CD14-positive monocyte (primary cell): ENCODE measurements at regions of chr20 and their contacts with region 1.

Region 1: DNA sequence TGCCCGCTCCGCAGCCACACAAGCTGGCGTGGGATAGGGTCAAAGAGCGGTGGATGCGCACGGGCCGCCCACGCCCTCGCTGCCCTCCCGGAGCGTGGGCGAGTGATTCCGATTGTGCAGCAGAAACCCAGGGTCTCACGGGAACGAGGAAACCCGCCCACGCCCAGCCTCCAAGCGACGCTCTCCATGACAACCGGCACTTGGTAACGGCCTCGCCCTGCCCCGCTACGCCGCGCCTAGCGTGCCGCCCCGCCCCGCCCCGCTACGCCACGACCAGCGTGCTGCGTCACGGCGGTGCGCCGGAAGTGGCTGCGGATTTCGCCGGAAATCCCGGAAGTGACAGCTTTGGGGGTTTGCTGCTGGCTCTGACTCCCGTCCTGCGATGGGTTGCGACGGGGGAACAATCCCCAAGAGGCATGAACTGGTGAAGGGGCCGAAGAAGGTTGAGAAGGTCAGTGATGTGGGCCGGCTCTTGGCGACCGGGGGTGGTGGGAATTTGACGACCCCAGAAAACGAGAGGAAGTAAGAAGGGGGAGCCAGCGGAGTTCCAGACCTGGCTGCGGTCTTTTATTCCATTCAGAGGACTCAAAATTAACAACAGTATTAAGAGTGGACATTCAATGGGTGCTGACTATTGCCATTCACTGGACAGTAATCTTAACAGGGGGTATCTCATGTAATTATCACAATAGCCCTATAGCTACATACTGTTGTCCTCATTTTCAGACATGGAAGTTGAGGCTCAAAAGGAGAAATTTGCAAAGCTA is at the start of gene RTF2:
- DNase-seq: peak; percentile 93 to 96 (median 95)
- H3K4me3 ChIP-seq: peak within 1 kb of the TSS; percentile 79 to 90 (median 86)
- H3K4me3 Mint-ChIP-seq: peak within 1 kb of the TSS; percentile 99
- H3K27ac ChIP-seq: peak within 1 kb of the TSS; percentile 75 to 96
- H3K27ac Mint-ChIP-seq: peak within 1 kb of the TSS; percentile 100
- H3K4me1 ChIP-seq: peaks cover 36 to 55% of the 10 kb centered on the region in 2 donors
- H3K4me1 Mint-ChIP-seq: peaks cover 34% of the 10 kb centered on the region
- H3K27me3 ChIP-seq: no peaks in the 10 kb centered on the region
- H3K27me3 Mint-ChIP-seq: peaks cover 0 to 2% (median 1%) of the 10 kb centered on the region in 3 donors
- CTCF ChIP-seq: no peak
- polyA plus RNA-seq, gene RTF2: 74.3 to 163 (median 148) TPM

Region 2: GRCh38 chr20:56392282-56393137 is 76.0 kb before region 1 on chr20 and contains the start of gene CSTF1:
- intact Hi-C with region 1: loop called (anchors 5 kb)
- DNase-seq: peak; percentile 100
- H3K4me3 ChIP-seq: peak within 1 kb of the TSS; percentile 86 to 96 (median 86)
- H3K4me3 Mint-ChIP-seq: no peak within 1 kb of the TSS
- H3K27ac ChIP-seq: peak within 1 kb of the TSS; percentile 85 to 94
- H3K27ac Mint-ChIP-seq: peak within 1 kb of the TSS in 5 of 7 donors; percentile 22 to 90 (median 75)
- H3K4me1 ChIP-seq: peaks cover 19 to 28% of the 10 kb centered on the region in 2 donors
- H3K4me1 Mint-ChIP-seq: peaks cover 26% of the 10 kb centered on the region
- H3K27me3 ChIP-seq: no peaks in the 10 kb centered on the region
- H3K27me3 Mint-ChIP-seq: no peaks in the 10 kb centered on the region
- CTCF ChIP-seq: no peak
- polyA plus RNA-seq, gene CSTF1: 7.7 to 15.7 (median 10.7) TPM

Region 3: GRCh38 chr20:56409521-56409920 is 59.0 kb before region 1 on chr20:
- intact Hi-C with region 1: loop called in 1 of 2 experiments (anchors 5 kb)
- DNase-seq: peak; percentile 87 to 96 (median 91)
- H3K4me3 ChIP-seq: peak overlapping the region in 1 of 3 experiments; percentile 29
- H3K4me3 Mint-ChIP-seq: no peak overlapping the region
- H3K27ac ChIP-seq: peak overlapping the region in 1 of 2 donors; percentile 75
- H3K27ac Mint-ChIP-seq: peak overlapping the region; percentile 79 to 94 (median 88)
- H3K4me1 ChIP-seq: peaks cover 49 to 51% of the 10 kb centered on the region in 2 donors
- H3K4me1 Mint-ChIP-seq: peaks cover 46% of the 10 kb centered on the region
- H3K27me3 ChIP-seq: no peaks in the 10 kb centered on the region
- H3K27me3 Mint-ChIP-seq: peaks cover 0 to 4% (median 0%) of the 10 kb centered on the region in 3 donors
- CTCF ChIP-seq: no peak

Region 4: GRCh38 chr20:56422076-56422823 is 46.2 kb before region 1 on chr20:
- intact Hi-C with region 1: loop called (anchors 5 kb)
- DNase-seq: peak; percentile 46 to 78 (median 76)
- H3K4me3 ChIP-seq: peak overlapping the region in 1 of 3 experiments; percentile 29
- H3K4me3 Mint-ChIP-seq: peak overlapping the region in 1 of 2 donors; percentile 62
- H3K27ac ChIP-seq: no peak overlapping the region
- H3K27ac Mint-ChIP-seq: peak overlapping the region in 6 of 7 donors; percentile 26 to 83 (median 72)
- H3K4me1 ChIP-seq: peaks cover 84 to 88% of the 10 kb centered on the region in 2 donors
- H3K4me1 Mint-ChIP-seq: peaks cover 85% of the 10 kb centered on the region
- H3K27me3 ChIP-seq: peaks cover 7 to 9% of the 10 kb centered on the region in 2 donors
- H3K27me3 Mint-ChIP-seq: peaks cover 16 to 30% (median 18%) of the 10 kb centered on the region in 3 donors
- CTCF ChIP-seq: no peak

Region 5: GRCh38 chr20:56504373-56505005 is 36.0 kb after region 1 on chr20:
- intact Hi-C with region 1: no loop called
- DNase-seq: no peak
- H3K4me3 ChIP-seq: no peak overlapping the region
- H3K4me3 Mint-ChIP-seq: no peak overlapping the region
- H3K27ac ChIP-seq: peak overlapping the region in 1 of 2 donors; percentile 27
- H3K27ac Mint-ChIP-seq: no peak overlapping the region
- H3K4me1 ChIP-seq: no peaks in the 10 kb centered on the region
- H3K4me1 Mint-ChIP-seq: no peaks in the 10 kb centered on the region
- H3K27me3 ChIP-seq: no peaks in the 10 kb centered on the region
- H3K27me3 Mint-ChIP-seq: no peaks in the 10 kb centered on the region
- CTCF ChIP-seq: peak; percentile 71